Prostate gland (tissue), 2 donors: ENCODE measurements at regions of chr17 and their contacts with region 1.

Region 1: GRCh38 chr17:50626037-50626574 is 8.6 kb upstream of the ABCC3 start:
- DNase-seq: peak; percentile 81
- H3K4me3 ChIP-seq: no peak overlapping the region
- H3K27ac ChIP-seq: no peak overlapping the region
- H3K4me1 ChIP-seq: no peaks in the 10 kb centered on the region
- H3K27me3 ChIP-seq: no peaks in the 10 kb centered on the region
- CTCF ChIP-seq: peak; percentile 52 to 91 (median 88)
- POLR2A ChIP-seq: no peak

Region 2: GRCh38 chr17:50596191-50597037 is 29.7 kb before region 1 on chr17:
- intact Hi-C with region 1: no loop called
- DNase-seq: no peak
- H3K4me3 ChIP-seq: no peak overlapping the region
- H3K27ac ChIP-seq: no peak overlapping the region
- H3K4me1 ChIP-seq: peaks cover 3% of the 10 kb centered on the region
- H3K27me3 ChIP-seq: no peaks in the 10 kb centered on the region
- CTCF ChIP-seq: no peak
- POLR2A ChIP-seq: no peak

Region 3: DNA sequence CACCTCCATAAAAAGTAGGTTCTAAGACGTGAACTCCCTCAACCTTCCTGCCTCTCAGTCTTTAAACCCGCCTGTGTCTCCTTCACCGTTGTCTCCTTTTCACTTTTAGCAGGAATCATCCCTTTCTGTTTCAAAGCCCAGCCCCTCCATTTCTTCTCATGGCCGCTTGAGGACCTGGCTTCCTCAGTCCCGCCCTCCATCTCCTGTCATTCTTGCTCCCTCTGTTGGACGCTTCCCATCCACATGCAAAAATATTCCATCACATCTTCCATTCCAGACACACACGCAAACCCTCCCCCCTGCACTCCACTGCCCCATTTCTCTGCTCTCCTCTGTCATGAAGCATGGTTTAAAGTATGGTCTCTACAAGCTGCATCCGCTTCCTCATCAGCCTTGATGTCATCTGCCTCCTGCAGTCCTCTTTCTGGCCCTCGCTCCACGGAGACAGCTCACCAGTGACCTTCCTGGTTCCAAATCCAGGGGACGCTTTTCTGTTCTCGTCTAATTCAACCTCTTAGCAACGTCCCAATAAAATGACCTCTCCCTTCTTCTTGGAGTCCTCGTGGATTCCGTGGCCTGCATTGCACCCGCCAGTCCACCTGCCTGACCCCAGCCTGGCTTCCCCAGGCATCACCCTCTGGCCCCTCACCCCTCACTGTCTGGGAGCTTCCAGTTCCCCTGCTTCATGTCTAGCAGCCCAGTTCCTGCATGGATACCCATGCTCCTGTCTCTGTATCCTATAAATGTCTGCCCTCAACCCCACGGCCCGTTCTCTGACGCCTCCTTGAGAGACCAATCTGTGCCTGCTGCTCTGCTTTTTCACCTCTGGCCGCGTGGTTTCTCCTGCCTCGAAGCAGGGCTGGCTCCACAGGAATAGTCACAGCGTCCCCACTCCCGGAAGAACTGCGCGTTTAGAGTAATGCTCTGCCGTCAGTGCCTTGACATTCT is 55.4 kb after region 1 on chr17:
- intact Hi-C with region 1: loop called (anchors 5 kb)
- DNase-seq: peak; percentile 58
- H3K4me3 ChIP-seq: no peak overlapping the region
- H3K27ac ChIP-seq: no peak overlapping the region
- H3K4me1 ChIP-seq: no peaks in the 10 kb centered on the region
- H3K27me3 ChIP-seq: no peaks in the 10 kb centered on the region
- CTCF ChIP-seq: peak; percentile 20 to 77 (median 51)
- POLR2A ChIP-seq: no peak

Region 4: DNA sequence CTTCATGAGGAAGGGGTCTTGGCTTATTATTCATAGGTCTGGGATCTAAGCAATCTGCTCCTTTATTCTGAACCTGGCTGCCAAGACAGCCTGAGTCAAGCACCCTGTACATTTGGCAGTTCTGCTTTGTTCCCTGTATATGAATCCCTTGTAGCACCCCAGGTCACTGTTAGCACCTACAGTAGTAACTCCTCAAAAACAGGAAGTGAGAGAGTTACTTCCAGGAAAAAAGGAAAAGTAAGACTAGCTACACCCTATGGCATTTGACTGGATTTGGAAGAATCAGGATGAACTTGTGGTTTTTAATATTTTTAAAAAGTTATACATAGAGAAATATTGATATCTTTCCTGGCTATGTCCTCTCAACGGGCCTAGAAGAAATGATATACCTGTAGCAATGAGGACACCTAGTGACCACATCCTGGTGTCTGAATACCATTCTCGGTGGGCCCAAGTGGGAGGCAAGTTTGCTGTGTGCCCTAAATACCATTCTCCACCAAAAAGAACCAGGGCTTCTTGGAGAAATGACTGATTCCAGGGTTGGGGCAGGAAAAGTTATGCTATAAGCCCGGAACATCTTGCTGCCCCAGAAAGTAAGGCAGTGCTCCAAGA is 71.7 kb after region 1 on chr17:
- intact Hi-C with region 1: loop called (anchors 5 kb)
- DNase-seq: no peak
- H3K4me3 ChIP-seq: no peak overlapping the region
- H3K27ac ChIP-seq: no peak overlapping the region
- H3K4me1 ChIP-seq: peaks cover 9% of the 10 kb centered on the region
- H3K27me3 ChIP-seq: no peaks in the 10 kb centered on the region
- CTCF ChIP-seq: peak in 1 of 4 experiments; percentile 20
- POLR2A ChIP-seq: no peak